ENCODE measurements at regions of chr20 and their contacts with region 1.

Region 1: GRCh38 chr20:44885392-44886265 is at the start of gene YWHAB:
- DNase-seq: peak; percentile 99
- H3K4me3 ChIP-seq: peak within 1 kb of the TSS; percentile 94 to 97
- H3K27ac ChIP-seq: peak within 1 kb of the TSS; percentile 94 to 96
- H3K4me1 ChIP-seq: peaks cover 0 to 51% (median 37%) of the 10 kb centered on the region in 4 donors
- H3K27me3 ChIP-seq: no peaks in the 10 kb centered on the region
- CTCF ChIP-seq: peak; percentile 13 to 14

Region 2: DNA sequence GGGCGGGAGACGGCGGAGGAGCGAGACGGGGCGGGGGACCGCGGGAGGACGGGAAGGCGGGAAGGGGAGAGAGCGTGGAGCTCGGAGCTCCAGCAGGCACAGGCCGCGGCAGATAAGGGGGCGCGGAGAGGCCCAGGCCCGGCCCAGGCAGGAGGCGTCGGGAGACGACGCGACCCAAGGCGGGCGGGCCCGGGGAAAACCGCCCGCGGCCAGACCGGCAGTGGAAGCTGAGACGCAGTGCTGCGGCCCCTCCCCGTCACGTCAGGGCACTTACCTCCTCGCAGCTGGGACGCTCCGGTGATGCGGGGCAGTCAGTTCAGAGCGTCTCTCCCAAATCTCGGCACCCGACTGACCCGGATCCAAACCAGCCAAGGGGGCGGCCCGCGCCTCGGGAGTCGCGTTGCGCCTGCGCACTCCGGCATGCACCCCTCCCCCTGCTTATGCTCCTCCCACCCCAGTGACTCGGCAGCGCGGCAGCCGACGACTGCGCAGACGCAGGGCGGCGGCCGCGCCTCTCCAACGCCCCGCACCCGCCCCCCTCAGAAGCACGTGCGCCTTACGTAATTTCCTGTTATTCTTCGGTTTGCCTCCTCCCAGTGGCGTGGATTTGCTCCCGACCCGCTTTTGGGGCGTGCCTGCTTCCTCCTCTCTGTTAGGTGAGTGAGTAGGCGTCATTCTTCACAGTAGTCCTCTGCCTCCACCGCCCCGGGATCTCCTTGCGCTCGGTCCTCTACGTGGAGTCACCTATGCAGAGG is 675.0 kb before region 1 on chr20 and contains the start of gene OSER1:
- intact Hi-C with region 1: loop called (anchors 10 kb)
- DNase-seq: peak; percentile 98 to 99
- H3K4me3 ChIP-seq: peak within 1 kb of the TSS; percentile 78 to 98
- H3K27ac ChIP-seq: peak within 1 kb of the TSS; percentile 96 to 99
- H3K4me1 ChIP-seq: peaks cover 0 to 52% (median 32%) of the 10 kb centered on the region in 4 donors
- H3K27me3 ChIP-seq: no peaks in the 10 kb centered on the region
- CTCF ChIP-seq: no peak

Region 3: GRCh38 chr20:44310664-44311639 is 574.7 kb before region 1 on chr20 and contains the start of gene FITM2:
- intact Hi-C with region 1: loop called (anchors 5 kb)
- DNase-seq: peak; percentile 98 to 99
- H3K4me3 ChIP-seq: peak within 1 kb of the TSS; percentile 78 to 95
- H3K27ac ChIP-seq: peak within 1 kb of the TSS; percentile 69 to 70
- H3K4me1 ChIP-seq: peaks cover 0 to 23% (median 16%) of the 10 kb centered on the region in 4 donors
- H3K27me3 ChIP-seq: no peaks in the 10 kb centered on the region
- CTCF ChIP-seq: peak; percentile 96 to 98

Region 4: DNA sequence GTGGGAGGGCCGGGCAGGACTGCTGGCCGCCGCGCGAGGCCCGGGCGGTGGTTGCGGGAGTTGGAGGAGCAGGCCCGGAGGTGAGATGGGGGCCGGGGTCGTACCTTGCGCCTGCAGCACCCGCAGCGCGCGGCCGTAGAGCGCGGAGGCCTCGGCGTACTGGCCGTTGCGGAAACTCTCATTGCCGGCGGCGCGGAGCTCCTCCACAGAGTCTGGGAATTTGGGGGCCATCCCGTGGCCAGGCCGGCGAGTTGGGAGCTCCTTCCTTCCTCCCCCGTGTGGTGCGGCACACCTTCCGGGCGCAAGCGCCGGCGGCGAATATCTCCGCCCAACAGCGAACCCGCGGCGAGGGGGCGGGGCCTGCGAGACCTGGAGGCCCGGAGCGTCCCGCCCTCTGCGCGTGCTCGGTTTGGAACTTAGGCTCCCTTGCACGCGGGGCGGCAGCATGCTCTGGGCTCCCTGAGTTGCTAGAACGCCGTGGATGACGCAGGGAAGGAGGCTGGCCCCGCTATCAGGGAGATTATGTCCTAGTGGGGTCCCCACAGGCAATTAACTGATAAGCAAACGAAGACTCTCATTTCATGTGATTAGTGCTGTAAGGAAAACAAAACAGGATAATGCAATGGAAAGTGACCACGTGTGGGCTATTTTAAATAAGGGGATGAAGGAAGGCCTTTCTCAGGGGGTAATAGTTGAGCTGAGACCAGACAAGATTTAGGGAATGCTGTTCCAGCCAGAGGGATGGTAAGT is 74.6 kb after region 1 on chr20 and contains the start of gene TOMM34:
- intact Hi-C with region 1: loop called (anchors 5 kb)
- DNase-seq: peak; percentile 97
- H3K4me3 ChIP-seq: peak within 1 kb of the TSS; percentile 82 to 90
- H3K27ac ChIP-seq: peak within 1 kb of the TSS; percentile 75 to 87
- H3K4me1 ChIP-seq: peaks cover 0 to 23% (median 13%) of the 10 kb centered on the region in 4 donors
- H3K27me3 ChIP-seq: no peaks in the 10 kb centered on the region
- CTCF ChIP-seq: no peak

Region 5: GRCh38 chr20:45362804-45363610 is 477.4 kb after region 1 on chr20 and contains the start of gene SYS1:
- intact Hi-C with region 1: loop called (anchors 10 kb)
- DNase-seq: peak; percentile 98 to 99
- H3K4me3 ChIP-seq: peak within 1 kb of the TSS; percentile 60 to 71
- H3K27ac ChIP-seq: peak within 1 kb of the TSS; percentile 86 to 88
- H3K4me1 ChIP-seq: peaks cover 0 to 50% (median 35%) of the 10 kb centered on the region in 4 donors
- H3K27me3 ChIP-seq: no peaks in the 10 kb centered on the region
- CTCF ChIP-seq: peak; percentile 91 to 94